Vagina (tissue), 2 donors: ENCODE measurements at regions of chr6 and their contacts with region 1.

Region 1: DNA sequence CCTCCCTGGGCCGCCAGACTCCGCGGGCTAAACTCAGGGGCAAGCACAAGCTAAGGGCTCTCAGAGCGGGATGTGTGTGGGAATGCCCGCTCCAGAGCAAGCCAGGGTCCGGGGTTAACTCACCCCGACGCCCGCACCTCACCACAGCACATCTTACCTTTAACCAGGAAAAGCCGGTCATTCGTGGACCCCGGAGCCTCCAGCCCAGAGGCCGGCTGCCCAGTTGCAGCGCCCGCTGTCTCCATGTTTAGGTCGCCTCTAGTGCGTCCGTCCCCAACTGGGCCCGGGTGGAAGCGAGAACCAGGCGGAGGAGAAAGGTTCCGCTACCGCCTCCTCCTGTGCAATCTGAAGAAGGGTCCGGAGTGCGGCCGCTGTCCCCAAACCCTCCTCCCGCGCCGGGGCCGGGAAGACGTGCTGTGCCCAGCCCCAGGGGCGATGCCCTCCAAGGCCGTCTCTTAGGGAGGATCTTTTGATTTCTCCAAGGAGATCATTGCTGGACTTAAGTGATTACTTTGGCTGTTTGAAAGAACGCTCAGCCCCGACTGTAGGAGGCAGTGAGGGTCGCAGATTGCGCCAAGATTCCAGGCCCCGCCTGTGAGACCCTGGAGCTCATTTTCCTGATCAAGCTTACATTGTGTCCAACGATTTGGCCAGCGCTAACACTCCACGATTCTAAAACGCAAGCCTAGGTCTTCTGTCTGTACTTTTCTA is at the start of gene TMEM242:
- DNase-seq: peak in 1 of 2 donors; percentile 96
- H3K4me3 ChIP-seq: peak within 1 kb of the TSS; percentile 65 to 87
- H3K27ac ChIP-seq: peak within 1 kb of the TSS; percentile 89
- H3K4me1 ChIP-seq: peaks cover 24% of the 10 kb centered on the region
- H3K27me3 ChIP-seq: no peaks in the 10 kb centered on the region
- CTCF ChIP-seq: peak in 1 of 3 experiments; percentile 27
- POLR2A ChIP-seq: peak in 1 of 2 donors; percentile 26
- total RNA-seq, gene TMEM242: 6.1 TPM

Region 2: DNA sequence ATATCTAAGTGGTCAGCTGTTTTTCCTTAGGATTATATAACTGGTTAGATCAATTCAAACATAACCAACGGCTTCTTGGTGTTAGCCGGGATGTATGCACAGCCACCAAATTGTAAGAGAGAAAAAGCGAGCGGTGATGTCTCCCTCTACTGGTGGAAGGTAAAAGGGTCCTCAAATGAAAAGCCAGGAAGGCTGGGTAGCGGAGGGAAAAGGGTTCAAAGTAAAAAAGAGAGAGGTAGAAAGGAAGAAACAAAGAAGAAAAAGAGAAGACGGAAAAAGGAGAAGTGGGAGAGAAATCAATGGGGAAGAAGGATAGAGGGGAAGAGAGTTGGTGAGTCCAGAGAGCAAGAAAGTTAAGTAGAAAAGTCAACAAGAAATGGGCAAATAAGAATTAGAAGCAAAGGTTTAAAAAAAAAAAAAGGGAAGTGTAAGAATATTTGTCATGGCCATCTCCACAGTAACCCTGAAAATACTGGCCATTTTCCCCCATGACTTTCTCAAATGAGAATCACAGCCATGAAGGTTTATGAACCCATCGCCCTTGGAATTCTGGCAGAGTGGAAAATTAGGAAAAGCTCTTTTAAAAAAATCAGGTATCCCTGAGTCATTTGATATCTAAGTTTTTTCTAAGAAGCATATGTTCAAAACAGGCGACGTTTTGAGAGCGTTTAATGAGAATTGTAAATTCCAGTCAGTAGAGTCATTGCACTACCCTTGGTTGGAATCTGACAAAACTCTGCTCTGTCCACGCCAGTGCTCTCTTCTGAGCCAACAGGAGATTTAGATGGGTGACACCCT is 344.0 kb after region 1 on chr6:
- intact Hi-C with region 1: loop called (anchors 10 kb)
- DNase-seq: no peak
- H3K4me3 ChIP-seq: no peak overlapping the region
- H3K27ac ChIP-seq: peak overlapping the region; percentile 65
- H3K4me1 ChIP-seq: peaks cover 24% of the 10 kb centered on the region
- H3K27me3 ChIP-seq: no peaks in the 10 kb centered on the region
- CTCF ChIP-seq: peak; percentile 54 to 74 (median 62)
- POLR2A ChIP-seq: no peak

Region 3: DNA sequence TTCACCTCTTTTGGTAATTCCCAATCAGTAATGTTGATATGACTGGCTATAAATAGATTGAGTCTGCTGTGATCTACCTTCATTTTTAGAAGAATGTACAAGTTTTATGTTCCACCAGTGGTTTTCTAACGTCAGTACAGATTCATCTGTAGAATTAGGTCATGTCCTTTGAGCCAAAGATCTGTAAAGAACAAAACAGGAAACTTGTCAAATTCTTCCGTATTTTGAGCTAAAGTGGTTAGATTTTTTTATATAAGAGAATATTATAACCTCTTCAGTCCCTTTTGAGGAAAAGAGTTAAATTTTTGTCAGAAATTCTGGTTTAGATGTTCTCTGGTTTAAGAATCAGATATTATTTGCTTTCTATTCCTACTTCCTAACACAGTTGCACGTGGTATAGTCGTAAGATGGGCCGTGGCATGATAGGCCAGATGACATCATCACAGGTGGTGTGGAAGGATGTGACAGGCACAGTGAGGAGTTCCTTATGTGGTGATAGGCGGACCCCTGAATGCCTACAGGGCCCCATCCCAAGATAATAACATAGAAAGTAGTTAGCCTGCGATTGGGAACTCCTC is 561.9 kb after region 1 on chr6:
- intact Hi-C with region 1: loop called (anchors 5 kb)
- DNase-seq: no peak
- H3K4me3 ChIP-seq: no peak overlapping the region
- H3K27ac ChIP-seq: no peak overlapping the region
- H3K4me1 ChIP-seq: no peaks in the 10 kb centered on the region
- H3K27me3 ChIP-seq: no peaks in the 10 kb centered on the region
- CTCF ChIP-seq: no peak
- POLR2A ChIP-seq: no peak